ENCODE measurements at regions of chr11 and their contacts with region 1.

Region 1: GRCh38 chr11:122655527-122656072 is at the start of gene UBASH3B:
- DNase-seq: peak; percentile 89
- ATAC-seq: peak; percentile 79
- H3K4me3 ChIP-seq: peak within 1 kb of the TSS; percentile 89
- H3K27ac ChIP-seq: peak within 1 kb of the TSS; percentile 93
- H3K4me1 ChIP-seq: peaks cover 12% of the 10 kb centered on the region
- H3K27me3 ChIP-seq: no peaks in the 10 kb centered on the region
- CTCF ChIP-seq: no peak
- POLR2A ChIP-seq: peak; percentile 96
- RAD21 ChIP-seq: no peak
- total RNA-seq, gene UBASH3B: 48.0 and 48.6 TPM in 2 replicates

Region 2: DNA sequence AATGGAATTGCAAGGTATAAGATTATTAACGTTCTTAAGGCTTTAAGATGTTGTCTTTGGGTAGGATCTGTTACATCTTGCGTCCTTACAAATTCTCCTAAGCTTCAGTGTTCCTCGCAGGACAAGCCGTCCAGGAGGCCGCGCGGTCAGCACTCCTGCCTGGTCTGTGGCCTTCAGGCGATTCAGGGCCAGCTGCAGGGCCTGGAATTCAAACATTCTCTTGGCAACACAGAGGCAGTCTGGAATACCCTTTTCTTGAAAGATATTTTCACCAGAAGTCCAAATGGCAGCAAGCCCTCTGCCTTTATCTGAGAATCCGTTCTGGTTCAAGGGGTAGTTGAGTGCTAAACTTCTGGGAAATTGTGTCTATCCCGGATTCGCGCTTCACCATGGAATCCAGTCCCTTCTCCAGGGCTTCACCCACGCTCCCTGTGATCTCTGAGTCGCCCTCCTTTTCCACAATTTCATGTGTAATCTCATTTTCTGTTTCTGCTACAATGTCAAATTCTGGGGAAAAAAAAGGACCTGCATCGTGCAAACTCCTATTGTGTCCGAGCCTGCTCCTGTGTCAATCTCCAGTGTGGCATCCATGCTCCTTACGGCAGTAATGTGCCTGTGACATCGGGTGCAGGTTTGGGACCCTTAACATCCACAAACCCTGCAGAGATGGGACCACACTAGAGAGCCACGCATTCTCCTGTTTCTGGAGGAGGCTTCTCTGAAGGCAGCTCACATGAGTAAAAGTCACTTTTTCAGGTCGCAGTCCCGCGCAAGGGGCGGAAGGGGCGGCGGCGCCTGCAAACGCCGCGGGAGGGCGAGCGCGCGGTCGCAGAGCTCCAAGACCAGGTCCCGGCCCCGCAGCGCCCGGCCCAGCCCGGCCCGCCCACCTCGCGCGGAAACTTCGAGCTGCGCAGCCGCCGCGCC is 1228.9 kb before region 1 on chr11:
- CTCF ChIA-PET with region 1: no interaction called
- POLR2A ChIA-PET with region 1: interaction called, 14 read pairs
- dilution Hi-C with region 1: no loop called
- in situ Hi-C with region 1: no loop called
- intact Hi-C with region 1: no loop called
- DNase-seq: no peak
- ATAC-seq: peak; percentile 87
- H3K4me3 ChIP-seq: no peak overlapping the region; the same call in 1 of the 2 replicates
- H3K27ac ChIP-seq: no peak overlapping the region
- H3K4me1 ChIP-seq: no peaks in the 10 kb centered on the region; the same call in 1 of the 2 replicates
- H3K27me3 ChIP-seq: peaks cover 36% of the 10 kb centered on the region
- CTCF ChIP-seq: no peak
- POLR2A ChIP-seq: no peak
- RAD21 ChIP-seq: no peak

Region 3: GRCh38 chr11:122137081-122137793 is 518.4 kb before region 1 on chr11:
- CTCF ChIA-PET with region 1: no interaction called
- POLR2A ChIA-PET with region 1: no interaction called
- dilution Hi-C with region 1: no loop called
- in situ Hi-C with region 1: no loop called
- intact Hi-C with region 1: no loop called
- DNase-seq: peak; percentile 96
- ATAC-seq: peak; percentile 65
- H3K4me3 ChIP-seq: no peak overlapping the region
- H3K27ac ChIP-seq: peak overlapping the region; percentile 96
- H3K4me1 ChIP-seq: peaks cover 14% of the 10 kb centered on the region
- H3K27me3 ChIP-seq: no peaks in the 10 kb centered on the region
- CTCF ChIP-seq: no peak
- POLR2A ChIP-seq: no peak
- RAD21 ChIP-seq: 0 out of 2 replicates have a peak, but pooled peaks have one; percentile 6

Region 4: GRCh38 chr11:122453586-122453985 is 202.0 kb before region 1 on chr11:
- CTCF ChIA-PET with region 1: no interaction called
- POLR2A ChIA-PET with region 1: no interaction called
- dilution Hi-C with region 1: no loop called
- in situ Hi-C with region 1: no loop called
- intact Hi-C with region 1: no loop called
- DNase-seq: no peak
- ATAC-seq: no peak
- H3K4me3 ChIP-seq: no peak overlapping the region
- H3K27ac ChIP-seq: no peak overlapping the region
- H3K4me1 ChIP-seq: no peaks in the 10 kb centered on the region
- H3K27me3 ChIP-seq: no peaks in the 10 kb centered on the region; the same call in none of the 2 replicates
- CTCF ChIP-seq: no peak
- POLR2A ChIP-seq: no peak
- RAD21 ChIP-seq: no peak

Region 5: GRCh38 chr11:122468965-122469364 is 186.6 kb before region 1 on chr11:
- CTCF ChIA-PET with region 1: no interaction called
- POLR2A ChIA-PET with region 1: no interaction called
- dilution Hi-C with region 1: no loop called
- in situ Hi-C with region 1: no loop called
- intact Hi-C with region 1: no loop called
- DNase-seq: no peak
- ATAC-seq: no peak
- H3K4me3 ChIP-seq: no peak overlapping the region
- H3K27ac ChIP-seq: no peak overlapping the region
- H3K4me1 ChIP-seq: no peaks in the 10 kb centered on the region
- H3K27me3 ChIP-seq: no peaks in the 10 kb centered on the region; the same call in 1 of the 2 replicates
- CTCF ChIP-seq: no peak
- POLR2A ChIP-seq: no peak
- RAD21 ChIP-seq: no peak

Region 6: GRCh38 chr11:122709039-122709760 is 53.6 kb after region 1 on chr11:
- CTCF ChIA-PET with region 1: no interaction called
- POLR2A ChIA-PET with region 1: no interaction called
- dilution Hi-C with region 1: no loop called
- in situ Hi-C with region 1: no loop called
- intact Hi-C with region 1: loop called (anchors 2 kb)
- DNase-seq: peak; percentile 82
- ATAC-seq: peak; percentile 61
- H3K4me3 ChIP-seq: no peak overlapping the region
- H3K27ac ChIP-seq: peak overlapping the region; percentile 28
- H3K4me1 ChIP-seq: peaks cover 34% of the 10 kb centered on the region
- H3K27me3 ChIP-seq: no peaks in the 10 kb centered on the region
- CTCF ChIP-seq: no peak
- POLR2A ChIP-seq: 0 out of 2 replicates have a peak, but pooled peaks have one; percentile 3
- RAD21 ChIP-seq: no peak

Region 7: GRCh38 chr11:122721964-122722266 is 66.3 kb after region 1 on chr11:
- CTCF ChIA-PET with region 1: interaction called, 3 read pairs
- POLR2A ChIA-PET with region 1: interaction called, 3 read pairs
- dilution Hi-C with region 1: no loop called
- in situ Hi-C with region 1: no loop called
- intact Hi-C with region 1: loop called (anchors 5 kb)
- DNase-seq: peak; percentile 94
- ATAC-seq: peak; percentile 71
- H3K4me3 ChIP-seq: no peak overlapping the region
- H3K27ac ChIP-seq: peak overlapping the region; percentile 42
- H3K4me1 ChIP-seq: peaks cover 31% of the 10 kb centered on the region
- H3K27me3 ChIP-seq: no peaks in the 10 kb centered on the region
- CTCF ChIP-seq: no peak
- POLR2A ChIP-seq: no peak
- RAD21 ChIP-seq: no peak

Measured in IMR-90 (cell line).